ENCODE measurements at regions of chr3 and their contacts with region 1.

Region 1: DNA sequence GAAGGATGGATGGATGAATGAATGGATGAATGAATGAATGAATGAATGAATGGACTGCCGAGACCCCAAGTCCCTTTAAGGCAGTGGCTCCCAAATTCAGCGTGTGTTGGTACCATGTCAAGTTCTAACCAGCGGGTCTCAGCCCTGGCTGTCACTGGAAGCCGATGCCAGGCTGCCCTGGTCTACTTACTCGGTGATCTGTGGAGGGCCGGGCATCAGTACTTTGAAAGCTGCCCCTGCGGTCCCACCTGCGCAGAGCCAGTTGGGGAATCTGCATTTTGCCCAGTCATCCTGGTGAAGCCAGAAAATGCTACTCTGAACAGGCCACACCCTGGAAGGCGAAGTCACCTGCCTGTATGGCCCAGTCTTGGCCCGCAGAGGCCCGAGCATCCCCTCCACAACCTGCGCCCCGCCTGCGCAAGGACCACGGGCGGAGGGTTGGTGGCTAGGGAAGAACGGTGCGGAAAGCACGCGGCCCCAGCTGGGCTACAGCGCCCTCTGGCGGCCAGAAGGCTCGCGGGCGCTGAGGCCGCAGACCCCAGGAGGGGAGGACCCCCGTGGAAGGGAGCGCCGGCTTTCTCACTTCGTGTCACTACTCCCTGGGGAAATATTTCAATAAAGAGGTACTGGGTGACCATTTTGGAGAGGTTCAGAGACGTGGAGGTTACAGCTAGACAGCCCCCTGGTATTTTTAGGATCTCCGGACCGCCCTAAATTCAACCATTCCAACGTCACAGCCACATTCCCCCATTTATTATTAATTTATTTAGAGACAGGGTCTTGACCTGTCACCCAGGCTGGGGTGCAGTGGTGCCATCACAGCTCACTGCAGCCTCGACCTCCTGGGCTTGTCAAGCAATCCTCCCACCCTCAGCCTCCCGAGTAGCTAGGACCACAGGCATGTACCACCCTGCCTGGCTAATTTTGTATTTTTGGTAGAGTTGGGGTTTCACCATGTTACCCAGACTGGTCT is 34.9 kb downstream of the PRKCD start:
- DNase-seq: peak; percentile 82
- ATAC-seq: peak; percentile 80
- H3K4me3 ChIP-seq: no peak overlapping the region
- H3K27ac ChIP-seq: no peak overlapping the region
- H3K4me1 ChIP-seq: peaks cover 26% of the 10 kb centered on the region
- H3K27me3 ChIP-seq: no peaks in the 10 kb centered on the region
- CTCF ChIP-seq: peak; percentile 98

Region 2: GRCh38 chr3:52867098-52867800 is 328.6 kb before region 1 on chr3:
- intact Hi-C with region 1: no loop called
- DNase-seq: no peak
- ATAC-seq: no peak
- H3K4me3 ChIP-seq: no peak overlapping the region
- H3K27ac ChIP-seq: no peak overlapping the region
- H3K4me1 ChIP-seq: no peaks in the 10 kb centered on the region
- H3K27me3 ChIP-seq: no peaks in the 10 kb centered on the region
- CTCF ChIP-seq: no peak

Region 3: GRCh38 chr3:53114011-53114400 is 81.9 kb before region 1 on chr3:
- intact Hi-C with region 1: loop called (anchors 2 kb)
- DNase-seq: peak; percentile 75
- ATAC-seq: peak; percentile 86
- H3K4me3 ChIP-seq: no peak overlapping the region
- H3K27ac ChIP-seq: no peak overlapping the region
- H3K4me1 ChIP-seq: peaks cover 7% of the 10 kb centered on the region
- H3K27me3 ChIP-seq: no peaks in the 10 kb centered on the region
- CTCF ChIP-seq: peak; percentile 96

Region 4: GRCh38 chr3:53531749-53532148 is 335.9 kb after region 1 on chr3:
- intact Hi-C with region 1: no loop called
- DNase-seq: no peak
- ATAC-seq: peak; percentile 25
- H3K4me3 ChIP-seq: no peak overlapping the region
- H3K27ac ChIP-seq: no peak overlapping the region
- H3K4me1 ChIP-seq: no peaks in the 10 kb centered on the region
- H3K27me3 ChIP-seq: no peaks in the 10 kb centered on the region
- CTCF ChIP-seq: peak; percentile 9

Measured in upper lobe of right lung (tissue), 1 donor.